ENCODE measurements at regions of chr4 and their contacts with region 1.

Region 1: DNA sequence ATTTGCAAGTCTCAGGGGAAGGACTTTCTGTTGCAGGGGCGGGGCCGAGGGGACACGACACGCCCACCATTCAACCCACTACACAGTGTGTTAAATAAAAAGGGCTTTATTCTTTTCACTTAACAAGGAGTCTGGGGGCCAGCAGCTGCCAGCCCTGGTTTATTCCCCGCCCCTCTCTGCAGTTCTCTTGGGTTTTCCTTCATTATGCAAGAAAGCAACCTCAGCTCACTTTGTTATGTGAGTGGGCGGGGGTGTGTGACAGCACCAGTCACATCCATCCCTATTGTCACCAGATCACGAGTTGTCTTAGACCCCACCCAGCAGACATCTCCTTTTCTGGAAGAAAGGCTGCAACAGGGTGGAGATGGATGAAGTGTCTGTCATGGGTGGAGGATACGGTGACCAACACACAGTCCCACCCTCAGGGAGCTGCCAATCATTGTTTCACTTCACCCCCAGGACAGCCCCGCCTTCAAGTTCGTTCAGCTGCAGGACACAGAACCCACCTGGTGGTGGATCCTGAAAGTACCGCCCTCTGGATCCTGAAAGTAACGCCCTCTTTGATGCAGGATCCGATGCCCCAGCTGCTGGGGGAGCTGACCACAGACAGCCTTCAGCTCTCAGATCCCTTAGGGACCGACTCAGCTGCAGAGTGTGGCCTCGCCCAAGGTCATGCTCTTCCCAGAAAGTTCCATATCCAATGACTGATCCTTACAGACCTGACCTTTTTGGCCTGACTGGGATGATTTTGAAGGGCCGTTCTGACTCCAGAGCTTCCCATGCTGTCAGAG is 79.6 kb downstream of the SMIM20 start:
- DNase-seq: peak in 1 of 9 donors; percentile 8
- ATAC-seq: peak; percentile 41
- H3K4me3 ChIP-seq: no peak overlapping the region
- H3K4me3 Mint-ChIP-seq: no peak overlapping the region
- H3K27ac ChIP-seq: no peak overlapping the region
- H3K27ac Mint-ChIP-seq: peak overlapping the region in 2 of 9 donors; percentile 48 to 62
- H3K4me1 ChIP-seq: no peaks in the 10 kb centered on the region
- H3K4me1 Mint-ChIP-seq: peaks cover 0 to 11% (median 0%) of the 10 kb centered on the region in 7 donors
- H3K27me3 ChIP-seq: no peaks in the 10 kb centered on the region
- H3K27me3 Mint-ChIP-seq: no peaks in the 10 kb centered on the region

Region 2: DNA sequence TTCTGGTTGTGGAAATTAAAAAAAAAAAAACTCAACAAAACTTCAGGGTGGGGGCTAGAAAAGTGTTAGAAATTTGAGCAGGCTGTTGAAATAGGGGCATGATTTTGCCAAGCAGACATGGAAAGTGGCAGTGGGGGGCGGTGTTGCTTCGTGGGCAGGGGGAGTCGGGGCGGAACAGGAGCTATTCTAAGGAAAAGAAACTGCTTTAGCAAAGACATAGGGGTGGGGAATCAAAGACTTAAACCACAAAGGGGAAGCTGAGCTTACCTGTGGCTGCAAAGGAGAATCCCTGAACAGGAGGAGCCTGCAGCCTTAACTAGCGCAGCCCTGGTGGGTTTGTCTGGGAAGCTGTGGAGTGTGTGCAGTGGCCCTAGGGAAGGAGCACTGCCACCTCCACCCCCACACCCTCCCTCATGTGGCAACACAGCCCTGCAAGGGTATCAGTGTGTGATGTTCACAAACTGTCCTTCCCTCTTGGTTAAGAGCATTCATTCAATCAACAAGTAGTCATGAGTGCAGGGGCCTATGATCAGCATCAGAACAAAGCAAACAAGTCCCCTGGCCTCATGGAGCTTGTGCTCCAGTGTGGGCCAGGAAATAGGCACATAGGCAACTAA is 151.3 kb before region 1 on chr4:
- CTCF ChIA-PET with region 1: interaction called, 5 read pairs
- POLR2A ChIA-PET with region 1: no interaction called
- intact Hi-C with region 1: loop called (anchors 1 kb)
- DNase-seq: peak in 7 of 9 donors; percentile 24 to 51 (median 46)
- ATAC-seq: peak; percentile 78
- H3K4me3 ChIP-seq: no peak overlapping the region
- H3K4me3 Mint-ChIP-seq: peak overlapping the region; percentile 1 to 63 (median 40)
- H3K27ac ChIP-seq: no peak overlapping the region
- H3K27ac Mint-ChIP-seq: peak overlapping the region in 4 of 9 donors; percentile 16 to 84 (median 40)
- H3K4me1 ChIP-seq: peaks cover 5 to 14% of the 10 kb centered on the region in 2 donors
- H3K4me1 Mint-ChIP-seq: peaks cover 27 to 55% (median 37%) of the 10 kb centered on the region in 7 donors
- H3K27me3 ChIP-seq: no peaks in the 10 kb centered on the region
- H3K27me3 Mint-ChIP-seq: no peaks in the 10 kb centered on the region

Region 3: GRCh38 chr4:25958110-25958509 is 35.5 kb before region 1 on chr4:
- CTCF ChIA-PET with region 1: no interaction called
- POLR2A ChIA-PET with region 1: no interaction called
- intact Hi-C with region 1: no loop called
- DNase-seq: no peak
- ATAC-seq: no peak
- H3K4me3 ChIP-seq: no peak overlapping the region
- H3K4me3 Mint-ChIP-seq: no peak overlapping the region
- H3K27ac ChIP-seq: no peak overlapping the region
- H3K27ac Mint-ChIP-seq: no peak overlapping the region
- H3K4me1 ChIP-seq: no peaks in the 10 kb centered on the region
- H3K4me1 Mint-ChIP-seq: no peaks in the 10 kb centered on the region
- H3K27me3 ChIP-seq: no peaks in the 10 kb centered on the region
- H3K27me3 Mint-ChIP-seq: peaks cover 0 to 15% (median 4%) of the 10 kb centered on the region in 5 donors

Region 4: DNA sequence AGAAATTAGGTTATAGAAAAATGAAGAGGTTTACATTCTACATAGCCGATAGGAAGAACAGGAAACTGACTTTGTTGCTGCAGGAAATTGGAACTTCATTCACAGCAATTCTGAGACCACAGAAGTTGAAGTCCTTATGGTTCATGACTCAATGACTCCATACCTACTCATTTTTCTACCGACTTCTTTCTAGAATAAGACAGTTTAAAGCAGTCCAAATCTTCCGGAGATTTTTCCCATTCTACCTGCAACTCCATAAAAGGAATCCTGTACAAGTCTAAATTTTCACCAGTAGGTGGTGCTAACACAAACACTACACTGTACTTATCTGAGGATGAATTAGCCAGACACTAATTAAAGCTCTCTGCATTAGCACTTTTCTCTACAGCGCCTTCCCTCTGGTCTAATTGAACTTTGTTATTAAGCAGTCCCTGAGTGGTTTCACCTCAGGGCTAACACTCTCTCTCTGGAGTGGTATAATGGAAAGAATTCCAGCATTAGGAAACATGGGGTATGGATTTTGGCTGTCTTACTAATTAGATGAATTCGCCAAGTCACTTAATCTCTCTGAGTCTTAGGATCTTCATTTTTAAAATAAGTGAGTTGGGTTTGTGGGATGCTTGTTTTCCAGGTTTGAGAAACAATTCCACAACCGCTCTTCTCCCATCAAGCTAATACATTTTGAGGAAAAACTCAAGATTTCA is 88.4 kb after region 1 on chr4:
- CTCF ChIA-PET with region 1: no interaction called
- POLR2A ChIA-PET with region 1: no interaction called
- intact Hi-C with region 1: loop called in 1 of 2 experiments (anchors 1 kb)
- DNase-seq: peak in 5 of 9 donors; percentile 16 to 29 (median 22)
- ATAC-seq: peak; percentile 66
- H3K4me3 ChIP-seq: no peak overlapping the region
- H3K4me3 Mint-ChIP-seq: peak overlapping the region in 1 of 10 donors; percentile 49
- H3K27ac ChIP-seq: no peak overlapping the region
- H3K27ac Mint-ChIP-seq: peak overlapping the region in 1 of 9 donors; percentile 73
- H3K4me1 ChIP-seq: no peaks in the 10 kb centered on the region
- H3K4me1 Mint-ChIP-seq: peaks cover 0 to 65% (median 6%) of the 10 kb centered on the region in 7 donors
- H3K27me3 ChIP-seq: no peaks in the 10 kb centered on the region
- H3K27me3 Mint-ChIP-seq: peaks cover 0 to 38% (median 7%) of the 10 kb centered on the region in 5 donors

Region 5: DNA sequence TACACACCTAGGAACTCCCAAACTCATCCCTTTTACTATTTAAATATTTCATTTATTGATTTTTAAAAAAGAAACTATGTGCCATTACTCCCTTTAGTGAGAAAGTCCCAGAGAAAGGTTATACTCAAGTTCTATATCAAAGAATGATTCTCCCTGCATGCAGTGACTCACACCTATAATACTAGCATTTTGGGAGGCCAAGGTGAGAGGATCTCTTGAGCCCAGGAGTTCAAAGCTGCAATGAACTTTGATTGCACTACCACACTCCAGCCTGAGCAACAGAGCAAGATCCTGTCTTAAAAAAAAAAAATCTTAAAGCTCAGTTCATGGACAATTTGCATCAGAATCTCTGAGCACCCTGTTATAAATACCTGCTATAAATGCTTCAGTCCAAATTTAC is 318.0 kb after region 1 on chr4:
- CTCF ChIA-PET with region 1: no interaction called
- POLR2A ChIA-PET with region 1: no interaction called
- intact Hi-C with region 1: no loop called
- DNase-seq: no peak
- ATAC-seq: no peak
- H3K4me3 ChIP-seq: no peak overlapping the region
- H3K4me3 Mint-ChIP-seq: no peak overlapping the region
- H3K27ac ChIP-seq: no peak overlapping the region
- H3K27ac Mint-ChIP-seq: no peak overlapping the region
- H3K4me1 ChIP-seq: peaks cover 0 to 14% of the 10 kb centered on the region in 2 donors
- H3K4me1 Mint-ChIP-seq: peaks cover 0 to 31% (median 0%) of the 10 kb centered on the region in 7 donors
- H3K27me3 ChIP-seq: no peaks in the 10 kb centered on the region
- H3K27me3 Mint-ChIP-seq: no peaks in the 10 kb centered on the region

Region 6: GRCh38 chr4:26719954-26720552 is 726.5 kb after region 1 on chr4:
- CTCF ChIA-PET with region 1: no interaction called
- POLR2A ChIA-PET with region 1: no interaction called
- intact Hi-C with region 1: loop called in 1 of 2 experiments (anchors 1 kb)
- DNase-seq: no peak
- ATAC-seq: no peak
- H3K4me3 ChIP-seq: no peak overlapping the region
- H3K4me3 Mint-ChIP-seq: no peak overlapping the region
- H3K27ac ChIP-seq: no peak overlapping the region
- H3K27ac Mint-ChIP-seq: no peak overlapping the region
- H3K4me1 ChIP-seq: peaks cover 5 to 9% of the 10 kb centered on the region in 2 donors
- H3K4me1 Mint-ChIP-seq: peaks cover 0 to 23% (median 13%) of the 10 kb centered on the region in 7 donors
- H3K27me3 ChIP-seq: no peaks in the 10 kb centered on the region
- H3K27me3 Mint-ChIP-seq: no peaks in the 10 kb centered on the region